Body of pancreas (tissue), 4 donors: ENCODE measurements at regions of chr1 and their contacts with region 1.

Region 1: DNA sequence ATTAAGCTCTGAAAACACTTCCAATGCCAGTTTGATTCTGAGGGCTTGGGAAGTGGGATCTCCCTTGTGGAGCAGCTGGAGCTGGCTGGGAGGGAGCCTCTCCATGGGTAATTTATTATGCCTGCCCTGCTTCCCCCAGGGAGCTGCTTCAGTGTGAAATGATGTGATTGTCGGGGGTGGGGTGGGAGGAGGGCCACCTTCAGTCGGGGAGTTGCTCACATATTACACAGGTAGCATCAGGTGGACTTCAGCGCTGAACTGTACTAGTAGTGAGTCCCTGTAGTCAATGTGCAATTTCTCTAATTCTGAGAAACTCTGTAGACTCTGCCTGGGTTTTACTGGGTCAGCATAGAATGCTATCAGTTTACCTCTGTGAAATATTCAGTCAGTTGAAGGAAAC is 12.8 kb downstream of the PLA2G2E start:
- DNase-seq: no peak
- ATAC-seq: no peak
- H3K4me3 ChIP-seq: no peak overlapping the region
- H3K27ac ChIP-seq: no peak overlapping the region
- H3K4me1 ChIP-seq: no peaks in the 10 kb centered on the region
- H3K27me3 ChIP-seq: no peaks in the 10 kb centered on the region
- CTCF ChIP-seq: no peak
- POLR2A ChIP-seq: no peak

Region 2: GRCh38 chr1:18365099-18365705 is 1545.4 kb before region 1 on chr1:
- intact Hi-C with region 1: no loop called
- DNase-seq: no peak
- ATAC-seq: no peak
- H3K4me3 ChIP-seq: no peak overlapping the region
- H3K27ac ChIP-seq: no peak overlapping the region
- H3K4me1 ChIP-seq: no peaks in the 10 kb centered on the region
- H3K27me3 ChIP-seq: no peaks in the 10 kb centered on the region
- CTCF ChIP-seq: no peak
- POLR2A ChIP-seq: no peak

Region 3: GRCh38 chr1:20148561-20149475 is 238.2 kb after region 1 on chr1:
- intact Hi-C with region 1: loop called (anchors 5 kb)
- DNase-seq: peak in 1 of 4 donors; percentile 8
- ATAC-seq: no peak
- H3K4me3 ChIP-seq: no peak overlapping the region
- H3K27ac ChIP-seq: no peak overlapping the region
- H3K4me1 ChIP-seq: peaks cover 12% of the 10 kb centered on the region
- H3K27me3 ChIP-seq: no peaks in the 10 kb centered on the region
- CTCF ChIP-seq: no peak
- POLR2A ChIP-seq: no peak